ENCODE measurements at regions of chr1 and their contacts with region 1.

Region 1: DNA sequence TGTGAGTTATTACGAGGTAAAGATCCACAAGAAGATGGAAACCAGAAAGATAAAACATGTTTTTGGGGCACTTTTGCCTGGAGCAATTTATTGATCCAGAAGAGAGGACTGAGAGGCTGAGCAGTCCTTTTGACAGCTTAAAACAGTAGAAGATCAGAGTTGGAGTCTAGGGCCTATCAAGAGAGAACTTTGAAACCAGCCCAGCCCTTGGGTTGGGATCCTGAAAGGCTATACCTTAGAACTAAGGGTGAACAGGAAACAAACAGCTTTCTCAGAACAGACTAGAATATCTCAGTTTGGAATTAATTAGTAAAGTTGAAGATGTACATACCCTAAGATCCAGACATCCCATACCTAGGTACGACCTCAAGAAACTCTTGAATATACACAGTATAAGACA is 89.6 kb downstream of the ZZZ3 start:
- DNase-seq: no peak
- ATAC-seq: no peak
- H3K4me3 ChIP-seq: no peak overlapping the region
- H3K27ac ChIP-seq: no peak overlapping the region
- H3K4me1 ChIP-seq: peaks cover 11% of the 10 kb centered on the region; the same call in 1 of the 2 replicates
- H3K27me3 ChIP-seq: no peaks in the 10 kb centered on the region
- CTCF ChIP-seq: no peak

Region 2: DNA sequence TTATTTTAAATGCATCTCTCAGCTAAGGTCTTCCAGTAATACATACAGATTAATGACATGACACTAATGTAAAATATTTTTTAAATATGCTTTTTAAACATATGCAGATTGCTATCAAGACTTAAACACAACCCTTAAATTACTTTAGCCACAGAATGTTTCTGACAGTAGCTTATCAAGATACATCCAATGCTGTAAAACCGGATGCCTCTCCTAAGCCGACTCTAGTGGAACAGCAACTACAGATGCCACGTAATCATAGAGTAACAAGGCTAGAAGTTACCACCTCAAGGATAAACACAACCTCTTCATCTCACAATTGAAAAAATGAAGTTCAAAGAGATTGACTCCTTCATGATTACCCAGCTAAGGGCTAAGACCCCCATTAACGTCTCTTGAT is 21.1 kb after region 1 on chr1:
- CTCF ChIA-PET with region 1: no interaction called
- POLR2A ChIA-PET with region 1: no interaction called
- intact Hi-C with region 1: loop called (anchors 2 kb)
- DNase-seq: no peak
- ATAC-seq: no peak
- H3K4me3 ChIP-seq: no peak overlapping the region
- H3K27ac ChIP-seq: no peak overlapping the region
- H3K4me1 ChIP-seq: no peaks in the 10 kb centered on the region
- H3K27me3 ChIP-seq: no peaks in the 10 kb centered on the region
- CTCF ChIP-seq: no peak